ENCODE measurements at regions of chr10 and their contacts with region 1.

Region 1: GRCh38 chr10:28250782-28251181 is 52.1 kb downstream of the MPP7 start:
- DNase-seq: no peak
- ATAC-seq: no peak
- H3K4me3 ChIP-seq: no peak overlapping the region
- H3K27ac ChIP-seq: no peak overlapping the region
- H3K4me1 ChIP-seq: peaks cover 3% of the 10 kb centered on the region
- H3K27me3 ChIP-seq: no peaks in the 10 kb centered on the region

Region 2: DNA sequence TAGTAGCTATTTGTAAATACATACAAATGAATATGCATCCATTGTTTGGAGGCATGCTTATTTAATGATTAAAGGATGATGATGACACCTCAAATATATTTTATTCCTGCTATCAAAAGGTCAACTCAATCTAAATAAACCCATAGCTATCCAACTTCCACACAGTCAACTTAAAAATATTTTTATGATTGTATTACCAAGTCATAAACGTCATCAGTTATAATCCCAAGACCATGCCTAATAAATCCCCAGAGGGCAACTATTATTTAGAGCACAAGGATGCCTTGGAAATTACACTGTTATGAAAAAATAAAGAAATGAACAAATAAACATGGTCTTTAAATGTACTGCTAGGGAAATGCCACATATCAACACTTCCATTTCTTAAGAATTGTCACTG is 50.0 kb before region 1 on chr10:
- intact Hi-C with region 1: no loop called
- DNase-seq: no peak
- ATAC-seq: no peak
- H3K4me3 ChIP-seq: no peak overlapping the region
- H3K27ac ChIP-seq: no peak overlapping the region
- H3K4me1 ChIP-seq: no peaks in the 10 kb centered on the region
- H3K27me3 ChIP-seq: no peaks in the 10 kb centered on the region

Region 3: GRCh38 chr10:28381903-28382347 is 131.1 kb after region 1 on chr10:
- intact Hi-C with region 1: loop called (anchors 2 to 5 kb)
- DNase-seq: peak; percentile 72 to 89 (median 77)
- ATAC-seq: peak; percentile 87 to 95
- H3K4me3 ChIP-seq: no peak overlapping the region
- H3K27ac ChIP-seq: no peak overlapping the region
- H3K4me1 ChIP-seq: no peaks in the 10 kb centered on the region
- H3K27me3 ChIP-seq: no peaks in the 10 kb centered on the region